SK-N-SH (cell line): ENCODE measurements at regions of chr5 and their contacts with region 1.

Region 1: GRCh38 chr5:177022384-177023308 is at the start of gene ZNF346:
- DNase-seq: peak; percentile 97
- H3K4me3 ChIP-seq: peak within 1 kb of the TSS; percentile 77 to 94
- H3K27ac ChIP-seq: peak within 1 kb of the TSS; percentile 61 to 80
- H3K4me1 ChIP-seq: peaks cover 0 to 5% of the 10 kb centered on the region in 2 experiments; a peak in 1 of 4 replicates
- H3K27me3 ChIP-seq: no peaks in the 10 kb centered on the region
- CTCF ChIP-seq: peak; percentile 55
- EP300 ChIP-seq: no peak
- RAD21 ChIP-seq: no peak
- polyA plus RNA-seq, gene ZNF346: 15.1 and 19.6 TPM in 2 replicates

Region 2: DNA sequence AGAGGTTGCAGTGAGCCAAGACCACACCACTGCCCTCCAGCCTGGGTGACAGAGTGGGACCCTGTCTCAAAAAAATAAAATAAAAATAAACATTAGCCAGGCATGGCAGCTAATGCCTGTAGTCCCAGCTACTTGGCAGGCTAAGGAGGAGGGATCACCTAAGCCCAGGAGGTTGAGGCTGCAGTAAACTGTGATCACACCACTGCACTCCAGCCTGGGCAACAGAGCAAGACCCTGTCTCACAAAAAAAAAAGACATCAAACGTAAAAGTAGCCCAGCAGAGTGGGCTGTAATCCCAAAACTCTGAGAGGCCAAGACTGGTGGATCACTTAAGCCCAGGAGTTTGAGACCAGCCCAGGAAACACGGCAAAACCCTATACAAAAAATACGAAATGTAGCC is 35.1 kb before region 1 on chr5:
- CTCF ChIA-PET with region 1: no interaction called
- POLR2A ChIA-PET with region 1: no interaction called
- DNase-seq: no peak
- H3K4me3 ChIP-seq: no peak overlapping the region
- H3K27ac ChIP-seq: no peak overlapping the region
- H3K4me1 ChIP-seq: no peaks in the 10 kb centered on the region
- H3K27me3 ChIP-seq: no peaks in the 10 kb centered on the region
- CTCF ChIP-seq: no peak
- EP300 ChIP-seq: no peak
- RAD21 ChIP-seq: no peak

Region 3: GRCh38 chr5:177006265-177006972 is 16.2 kb before region 1 on chr5 and contains the start of gene UIMC1:
- CTCF ChIA-PET with region 1: interaction called, 10 read pairs
- POLR2A ChIA-PET with region 1: interaction called, 4 read pairs
- DNase-seq: peak; percentile 97
- H3K4me3 ChIP-seq: peak within 1 kb of the TSS; percentile 73 to 86
- H3K27ac ChIP-seq: peak within 1 kb of the TSS; percentile 85 to 88
- H3K4me1 ChIP-seq: peaks cover 8% of the 10 kb centered on the region in 2 experiments; a peak in 3 of 4 replicates
- H3K27me3 ChIP-seq: no peaks in the 10 kb centered on the region
- CTCF ChIP-seq: no peak
- EP300 ChIP-seq: peak in 1 of 2 experiments; percentile 56; a peak in 1 of 4 replicates
- RAD21 ChIP-seq: no peak
- polyA plus RNA-seq, gene UIMC1: 19.9 and 24.3 TPM in 2 replicates

Region 4: DNA sequence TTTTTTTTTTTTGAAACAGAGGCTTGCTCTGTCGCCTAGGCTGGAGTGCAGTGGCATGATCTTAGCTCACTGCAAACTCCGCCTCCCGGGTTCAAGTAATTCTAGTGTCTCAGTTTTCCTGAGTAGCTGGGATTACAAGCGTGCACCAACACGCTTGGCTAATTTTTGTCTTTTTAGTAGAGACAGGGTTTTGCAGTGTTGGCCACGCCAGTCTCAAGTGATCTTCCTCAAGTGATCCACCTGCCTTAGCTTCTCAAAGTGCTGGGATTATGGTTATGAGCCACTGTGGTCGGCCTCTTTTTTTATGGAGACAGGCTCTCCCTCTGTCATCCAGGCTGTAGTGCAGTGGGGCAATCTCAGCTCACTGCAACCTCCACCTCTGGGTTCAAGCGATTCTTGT is 197.9 kb after region 1 on chr5:
- CTCF ChIA-PET with region 1: no interaction called
- POLR2A ChIA-PET with region 1: no interaction called
- DNase-seq: no peak
- H3K4me3 ChIP-seq: no peak overlapping the region
- H3K27ac ChIP-seq: no peak overlapping the region
- H3K4me1 ChIP-seq: no peaks in the 10 kb centered on the region
- H3K27me3 ChIP-seq: no peaks in the 10 kb centered on the region
- CTCF ChIP-seq: no peak
- EP300 ChIP-seq: no peak
- RAD21 ChIP-seq: no peak